Sigmoid colon (tissue), 7 donors: ENCODE measurements at regions of chr18 and their contacts with region 1.

Region 1: GRCh38 chr18:13481820-13482617 is 244.3 kb downstream of the FAM210A start:
- DNase-seq: peak; percentile 61
- H3K4me3 ChIP-seq: no peak overlapping the region
- H3K27ac ChIP-seq: no peak overlapping the region
- H3K4me1 ChIP-seq: peaks cover 0 to 24% (median 7%) of the 10 kb centered on the region in 4 donors
- H3K27me3 ChIP-seq: no peaks in the 10 kb centered on the region
- CTCF ChIP-seq: no peak
- EP300 ChIP-seq: no peak
- POLR2A ChIP-seq: no peak

Region 2: GRCh38 chr18:12851716-12852115 is 630.3 kb before region 1 on chr18:
- intact Hi-C with region 1: no loop called
- DNase-seq: no peak
- H3K4me3 ChIP-seq: no peak overlapping the region
- H3K27ac ChIP-seq: no peak overlapping the region
- H3K4me1 ChIP-seq: no peaks in the 10 kb centered on the region
- H3K27me3 ChIP-seq: no peaks in the 10 kb centered on the region
- CTCF ChIP-seq: no peak
- EP300 ChIP-seq: no peak
- POLR2A ChIP-seq: no peak

Region 3: DNA sequence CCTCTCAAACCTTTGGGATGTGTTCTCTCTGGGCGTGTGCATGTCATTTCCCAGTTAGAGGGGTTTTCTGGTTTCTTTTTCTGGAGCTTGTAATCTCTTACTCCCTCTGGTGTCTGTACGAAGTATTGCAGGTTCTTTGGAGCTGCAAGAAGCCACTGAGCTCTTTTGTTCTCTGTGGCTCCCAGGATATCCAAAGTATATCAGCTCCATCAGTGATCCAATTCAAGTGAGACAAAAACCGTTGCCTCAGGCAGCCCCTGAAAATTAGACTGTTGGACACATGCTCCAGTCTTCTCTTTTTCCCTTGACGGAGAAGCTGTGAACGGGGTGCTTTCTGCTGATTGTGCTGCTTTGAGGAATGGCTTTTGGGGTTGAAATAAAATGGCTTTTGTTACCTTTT is 322.4 kb before region 1 on chr18:
- intact Hi-C with region 1: no loop called
- DNase-seq: no peak
- H3K4me3 ChIP-seq: no peak overlapping the region
- H3K27ac ChIP-seq: no peak overlapping the region
- H3K4me1 ChIP-seq: no peaks in the 10 kb centered on the region
- H3K27me3 ChIP-seq: no peaks in the 10 kb centered on the region
- CTCF ChIP-seq: peak in 3 of 4 experiments; percentile 62 to 77 (median 68)
- EP300 ChIP-seq: no peak
- POLR2A ChIP-seq: no peak

Region 4: GRCh38 chr18:13464432-13465123 is 17.4 kb before region 1 on chr18:
- intact Hi-C with region 1: loop called (anchors 2 kb)
- DNase-seq: peak; percentile 79
- H3K4me3 ChIP-seq: no peak overlapping the region
- H3K27ac ChIP-seq: peak overlapping the region in 3 of 4 donors; percentile 30 to 51 (median 36)
- H3K4me1 ChIP-seq: peaks cover 0 to 10% (median 4%) of the 10 kb centered on the region in 4 donors
- H3K27me3 ChIP-seq: no peaks in the 10 kb centered on the region
- CTCF ChIP-seq: no peak
- EP300 ChIP-seq: no peak
- POLR2A ChIP-seq: no peak